Dorsolateral prefrontal cortex (tissue), 120 donors: ENCODE measurements at regions of chr7 and their contacts with region 1.

Region 1: GRCh38 chr7:74656837-74657691 is 454 bp upstream of the GTF2I start:
- DNase-seq: peak; percentile 93 to 99 (median 98)
- H3K4me3 ChIP-seq: peak overlapping the region; percentile 63 to 100 (median 93)
- H3K27ac ChIP-seq: peak overlapping the region; percentile 96 to 100 (median 100)
- H3K27me3 ChIP-seq: no peaks in the 10 kb centered on the region
- CTCF ChIP-seq: peak in 55 of 56 donors; percentile 29 to 76 (median 53)

Region 2: DNA sequence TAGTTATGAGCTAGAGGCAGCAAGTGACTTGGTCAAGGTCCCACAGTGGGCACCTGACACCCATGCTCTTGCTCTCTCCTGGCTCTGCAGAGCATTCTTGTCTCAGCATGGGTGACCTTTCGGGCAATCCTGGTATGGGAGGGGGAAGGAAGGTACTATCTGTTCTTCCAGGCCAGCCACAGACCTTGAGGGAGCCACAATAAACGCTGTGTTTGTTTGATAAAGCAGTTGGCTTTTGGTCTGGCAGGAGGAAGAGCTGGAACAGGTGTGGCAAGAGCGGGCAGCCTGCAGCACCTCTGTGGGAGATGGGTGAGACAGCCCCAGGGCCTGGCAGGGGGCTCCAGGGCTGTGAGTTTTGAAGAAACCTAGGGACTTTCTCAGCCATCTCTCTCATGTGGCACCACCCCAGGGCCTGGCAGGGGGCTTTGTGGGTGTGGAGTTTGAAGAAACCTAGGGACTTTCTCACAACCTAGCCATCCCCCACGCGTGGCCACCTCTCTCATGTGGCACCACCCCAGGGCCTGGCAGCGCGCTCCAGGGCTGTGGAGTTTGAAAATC is 898.4 kb before region 1 on chr7:
- intact Hi-C with region 1: no loop called
- DNase-seq: no peak
- H3K4me3 ChIP-seq: no peak overlapping the region
- H3K27ac ChIP-seq: no peak overlapping the region
- H3K27me3 ChIP-seq: no peaks in the 10 kb centered on the region
- CTCF ChIP-seq: no peak

Region 3: GRCh38 chr7:74417419-74417971 is 239.6 kb before region 1 on chr7:
- intact Hi-C with region 1: loop called (anchors 5 kb)
- DNase-seq: peak; percentile 52 to 82 (median 67)
- H3K4me3 ChIP-seq: no peak overlapping the region
- H3K27ac ChIP-seq: peak overlapping the region in 1 of 59 donors; percentile 36
- H3K27me3 ChIP-seq: peaks cover 0 to 4% (median 0%) of the 10 kb centered on the region in 45 donors
- CTCF ChIP-seq: peak; percentile 70 to 100 (median 97)

Region 4: DNA sequence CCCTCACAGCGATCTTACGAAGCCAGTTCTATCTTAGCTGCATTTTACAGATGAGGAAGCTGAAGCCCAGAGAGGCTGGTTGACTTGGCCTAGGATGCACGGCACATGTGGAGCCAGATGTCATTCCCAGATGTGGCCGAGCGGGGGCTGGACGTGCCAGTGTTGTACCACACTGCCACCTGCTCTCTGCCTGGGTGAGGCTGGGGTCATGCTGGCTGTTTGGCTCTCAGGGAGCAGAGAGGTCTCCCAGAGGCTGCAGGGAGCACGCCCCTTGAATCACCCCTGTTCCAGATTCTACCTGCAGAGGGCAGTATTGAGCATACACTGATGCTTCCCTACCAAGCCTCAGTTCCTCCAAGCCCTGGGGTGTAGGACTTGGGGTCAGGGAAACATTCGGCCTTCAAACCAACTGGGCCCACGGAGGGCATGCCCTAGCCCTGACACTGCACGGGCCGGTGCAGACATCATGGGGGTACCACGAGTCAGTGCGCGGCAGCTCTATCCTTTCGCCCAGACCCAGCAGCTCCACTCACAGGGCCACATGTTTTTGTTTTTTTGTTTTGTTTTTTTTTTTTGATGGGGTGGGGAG is 207.2 kb before region 1 on chr7:
- intact Hi-C with region 1: loop called in 1 of 2 experiments (anchors 10 kb)
- DNase-seq: peak in 3 of 10 donors; percentile 34 to 36 (median 34)
- H3K4me3 ChIP-seq: no peak overlapping the region
- H3K27ac ChIP-seq: no peak overlapping the region
- H3K27me3 ChIP-seq: no peaks in the 10 kb centered on the region
- CTCF ChIP-seq: peak; percentile 55 to 94 (median 83)

Region 5: DNA sequence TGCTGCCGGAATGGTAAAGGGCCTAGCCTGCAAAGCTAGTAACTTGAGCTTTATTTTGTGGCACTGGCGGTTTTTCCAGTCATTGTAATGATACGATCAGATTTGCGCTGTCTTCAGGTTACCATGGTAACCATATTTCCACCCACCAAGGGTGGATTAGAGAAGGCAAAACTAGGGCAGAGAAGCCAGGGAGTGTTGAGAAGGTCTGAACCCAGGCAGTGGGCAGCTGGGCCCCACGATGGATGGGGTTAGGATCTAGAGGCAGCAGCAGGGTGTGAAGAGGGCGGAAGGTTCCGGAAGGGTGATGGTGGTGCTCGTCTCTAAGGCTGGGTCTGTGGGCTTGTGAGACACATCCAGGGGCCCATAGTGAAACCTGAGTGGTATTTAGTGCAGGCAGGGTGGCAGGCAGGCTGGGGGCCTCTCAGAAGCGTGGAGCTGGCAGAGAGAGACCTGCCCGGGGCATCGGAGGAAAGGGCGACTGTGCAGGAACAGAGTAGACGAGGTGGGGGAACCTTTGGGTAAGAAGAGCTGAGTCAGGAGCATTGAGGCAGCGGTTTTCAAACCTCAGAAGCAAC is 87.5 kb before region 1 on chr7:
- intact Hi-C with region 1: loop called in 1 of 2 experiments (anchors 5 kb)
- DNase-seq: no peak
- H3K4me3 ChIP-seq: no peak overlapping the region
- H3K27ac ChIP-seq: peak overlapping the region in 26 of 59 donors; percentile 1 to 64 (median 31)
- H3K27me3 ChIP-seq: no peaks in the 10 kb centered on the region
- CTCF ChIP-seq: no peak

Region 6: GRCh38 chr7:74619228-74619860 is 37.7 kb before region 1 on chr7:
- intact Hi-C with region 1: no loop called
- DNase-seq: peak in 1 of 10 donors; percentile 85
- H3K4me3 ChIP-seq: no peak overlapping the region
- H3K27ac ChIP-seq: no peak overlapping the region
- H3K27me3 ChIP-seq: no peaks in the 10 kb centered on the region
- CTCF ChIP-seq: no peak

Region 7: GRCh38 chr7:74633451-74633921 is 23.6 kb before region 1 on chr7:
- intact Hi-C with region 1: loop called in 1 of 2 experiments (anchors 2 kb)
- DNase-seq: no peak
- H3K4me3 ChIP-seq: no peak overlapping the region
- H3K27ac ChIP-seq: no peak overlapping the region
- H3K27me3 ChIP-seq: no peaks in the 10 kb centered on the region
- CTCF ChIP-seq: no peak

Region 8: GRCh38 chr7:74709880-74710671 is 53.0 kb after region 1 on chr7:
- intact Hi-C with region 1: loop called in 1 of 2 experiments (anchors 5 kb)
- DNase-seq: no peak
- H3K4me3 ChIP-seq: no peak overlapping the region
- H3K27ac ChIP-seq: peak overlapping the region in 19 of 59 donors; percentile 2 to 53 (median 30)
- H3K27me3 ChIP-seq: no peaks in the 10 kb centered on the region
- CTCF ChIP-seq: peak in 36 of 56 donors; percentile 8 to 56 (median 30)